H1 (cell line): ENCODE measurements at regions of chr15 and their contacts with region 1.

Region 1: GRCh38 chr15:90086868-90087268 is 15.4 kb downstream of the IDH2 start:
- DNase-seq: peak in 1 of 2 experiments; percentile 75
- H3K4me3 ChIP-seq: no peak overlapping the region
- H3K27ac ChIP-seq: no peak overlapping the region
- H3K4me1 ChIP-seq: peaks cover 0 to 5% (median 2%) of the 10 kb centered on the region in 4 experiments; a peak in 3 of 7 replicates
- H3K27me3 ChIP-seq: no peaks in the 10 kb centered on the region
- CTCF ChIP-seq: peak; percentile 82 to 88 (median 84)
- EP300 ChIP-seq: no peak
- POLR2A ChIP-seq: no peak
- RAD21 ChIP-seq: peak; percentile 90 to 94

Region 2: GRCh38 chr15:89893696-89894455 is 193.0 kb before region 1 on chr15 and contains the start of gene AP3S2:
- CTCF ChIA-PET with region 1: interaction called, 46 read pairs
- POLR2A ChIA-PET with region 1: interaction called, 4 read pairs
- DNase-seq: peak; percentile 70 to 89
- H3K4me3 ChIP-seq: peak within 1 kb of the TSS; percentile 92 to 99 (median 98)
- H3K27ac ChIP-seq: peak within 1 kb of the TSS; percentile 81
- H3K4me1 ChIP-seq: no peaks in the 10 kb centered on the region; a peak in 2 of 7 replicates
- H3K27me3 ChIP-seq: no peaks in the 10 kb centered on the region
- CTCF ChIP-seq: no peak
- EP300 ChIP-seq: peak in 1 of 2 experiments; percentile 27; a peak in 1 of 3 replicates
- POLR2A ChIP-seq: peak; percentile 57 to 89
- RAD21 ChIP-seq: peak in 1 of 2 experiments; percentile 12; a peak in 1 of 4 replicates
- total RNA-seq, gene AP3S2: 42.3 and 45.4 TPM in 2 replicates

Region 3: GRCh38 chr15:90046911-90047392 is 39.9 kb before region 1 on chr15:
- CTCF ChIA-PET with region 1: interaction called, 13 read pairs
- POLR2A ChIA-PET with region 1: interaction called, 4 read pairs
- DNase-seq: no peak
- H3K4me3 ChIP-seq: no peak overlapping the region
- H3K27ac ChIP-seq: no peak overlapping the region
- H3K4me1 ChIP-seq: peaks cover 0 to 19% (median 3%) of the 10 kb centered on the region in 4 experiments; a peak in 3 of 7 replicates
- H3K27me3 ChIP-seq: no peaks in the 10 kb centered on the region
- CTCF ChIP-seq: no peak
- EP300 ChIP-seq: no peak
- POLR2A ChIP-seq: no peak
- RAD21 ChIP-seq: no peak

Region 4: DNA sequence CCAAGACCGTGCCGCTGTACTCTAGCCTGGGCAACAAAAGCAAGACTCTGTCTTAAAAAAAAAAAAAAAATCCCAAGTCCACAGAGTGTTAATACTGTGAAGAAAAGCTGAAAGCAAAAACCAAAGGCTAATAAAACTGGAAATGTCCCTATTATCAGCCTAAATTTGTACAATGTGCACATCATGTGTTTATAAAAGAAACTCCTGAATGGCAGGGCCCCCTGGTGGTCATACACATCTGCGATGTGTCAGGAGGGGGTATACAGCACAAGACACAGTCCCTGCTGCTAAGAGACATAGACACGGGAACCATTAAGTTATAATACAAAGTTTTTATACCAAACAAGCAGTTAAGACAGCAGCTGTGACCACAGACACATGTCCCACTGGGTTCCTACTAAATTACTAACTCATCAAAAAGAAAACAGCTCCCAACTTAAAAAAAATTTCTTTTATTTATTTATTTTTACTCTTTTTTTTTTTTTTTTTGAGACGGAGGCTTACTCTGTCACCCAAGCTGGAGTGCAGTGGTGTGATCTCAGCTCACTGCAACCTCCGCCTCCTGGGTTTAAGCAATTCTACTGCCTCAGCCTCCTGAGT is 15.6 kb before region 1 on chr15:
- CTCF ChIA-PET with region 1: interaction called, 99 read pairs
- POLR2A ChIA-PET with region 1: interaction called, 4 read pairs
- DNase-seq: no peak
- H3K4me3 ChIP-seq: no peak overlapping the region
- H3K27ac ChIP-seq: no peak overlapping the region
- H3K4me1 ChIP-seq: peaks cover 2 to 6% (median 5%) of the 10 kb centered on the region in 4 experiments; a peak in 5 of 7 replicates
- H3K27me3 ChIP-seq: no peaks in the 10 kb centered on the region
- CTCF ChIP-seq: peak; percentile 44 to 57 (median 54)
- EP300 ChIP-seq: no peak
- POLR2A ChIP-seq: no peak
- RAD21 ChIP-seq: peak; percentile 49 to 65

Region 5: DNA sequence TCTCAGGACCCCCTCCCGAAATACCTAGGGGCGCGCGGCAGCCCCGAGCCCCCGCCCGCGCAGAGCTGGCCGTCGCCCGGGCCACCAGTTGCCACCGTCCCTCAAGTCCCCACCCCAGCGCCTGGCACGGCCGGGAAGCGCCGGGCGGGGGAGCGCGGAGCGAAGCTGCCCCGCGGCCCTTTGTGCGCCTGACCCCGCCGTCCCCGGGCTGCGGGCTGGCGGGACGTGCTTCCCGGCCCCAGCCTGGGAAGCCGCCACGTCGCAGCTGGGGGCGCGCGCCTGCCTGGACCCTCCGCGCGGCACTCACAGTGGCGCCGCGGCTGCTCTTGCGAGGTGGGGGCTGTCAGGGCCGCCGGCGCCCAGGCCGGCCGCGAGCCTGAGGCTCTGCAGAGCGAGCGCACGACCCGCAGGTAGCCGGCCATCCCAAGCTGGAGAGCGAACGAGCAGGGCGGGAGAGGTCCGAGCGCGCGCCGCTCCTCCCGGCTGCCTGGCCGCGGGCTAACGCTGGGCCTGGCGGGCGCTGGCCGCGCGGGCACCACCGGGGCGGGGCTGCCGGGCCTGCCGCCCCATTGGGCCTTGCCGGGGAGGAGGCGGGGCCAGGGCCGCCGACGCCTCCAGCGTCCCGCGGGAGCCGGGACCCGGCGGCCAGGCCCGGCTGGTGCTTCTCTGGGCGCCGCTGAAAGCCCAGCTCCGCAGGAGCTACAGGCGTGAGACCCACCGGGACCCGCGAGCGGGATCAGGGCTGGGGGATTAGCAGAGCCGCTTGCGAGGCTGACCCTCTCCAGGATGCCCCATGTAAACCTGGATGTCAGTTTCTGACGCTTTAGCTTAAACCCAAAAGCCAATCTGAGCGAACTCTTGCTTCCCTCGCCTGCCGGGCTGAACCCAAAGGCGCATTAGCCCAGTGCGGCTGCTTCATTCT is 15.4 kb after region 1 on chr15 and contains the start of gene IDH2:
- CTCF ChIA-PET with region 1: interaction called, 56 read pairs
- POLR2A ChIA-PET with region 1: interaction called, 3 read pairs
- DNase-seq: peak in 1 of 2 experiments; percentile 88
- H3K4me3 ChIP-seq: peak within 1 kb of the TSS; percentile 70 to 85 (median 76)
- H3K27ac ChIP-seq: peak within 1 kb of the TSS; percentile 62; the same call in 1 of the 2 replicates
- H3K4me1 ChIP-seq: peaks cover 0 to 15% (median 9%) of the 10 kb centered on the region in 4 experiments; a peak in 6 of 7 replicates
- H3K27me3 ChIP-seq: peaks cover 0 to 21% (median 13%) of the 10 kb centered on the region in 4 experiments; a peak in 6 of 7 replicates
- CTCF ChIP-seq: no peak
- EP300 ChIP-seq: peak in 1 of 2 experiments; percentile 35; a peak in 1 of 3 replicates
- POLR2A ChIP-seq: peak; percentile 77 to 84
- RAD21 ChIP-seq: no peak
- total RNA-seq, gene IDH2: 64.2 and 64.6 TPM in 2 replicates